CD8-positive, alpha-beta T cell (primary cell): ENCODE measurements at regions of chr2 and their contacts with region 1.

Region 1: DNA sequence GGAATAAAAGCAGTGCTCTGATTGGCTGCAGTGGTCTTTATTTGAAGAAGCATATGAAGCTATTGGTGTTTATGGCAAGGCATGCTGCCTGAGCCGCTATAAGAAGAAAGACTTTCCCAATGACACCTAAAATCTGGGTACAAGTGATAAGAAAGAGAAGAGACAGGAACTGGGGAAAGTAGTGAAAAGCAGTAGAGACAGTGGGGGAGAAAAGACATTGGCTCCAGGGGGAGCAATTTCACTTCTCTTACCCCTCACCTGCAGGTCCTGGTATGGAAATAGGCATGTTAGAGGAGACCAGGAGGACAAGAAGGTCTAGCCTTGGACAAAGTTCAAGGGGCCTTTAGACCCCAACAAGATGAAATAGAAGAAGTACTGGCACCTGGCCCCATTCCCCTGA is 47.1 kb downstream of the PLCL1 start:
- DNase-seq: peak in 1 of 9 experiments; percentile 33
- ATAC-seq: no peak
- H3K4me3 ChIP-seq: no peak overlapping the region
- H3K4me3 Mint-ChIP-seq: no peak overlapping the region
- H3K27ac ChIP-seq: no peak overlapping the region
- H3K27ac Mint-ChIP-seq: no peak overlapping the region
- H3K4me1 ChIP-seq: peaks cover 23% of the 10 kb centered on the region
- H3K4me1 Mint-ChIP-seq: peaks cover 54% of the 10 kb centered on the region
- H3K27me3 ChIP-seq: no peaks in the 10 kb centered on the region
- H3K27me3 Mint-ChIP-seq: no peaks in the 10 kb centered on the region
- CTCF ChIP-seq: no peak

Region 2: DNA sequence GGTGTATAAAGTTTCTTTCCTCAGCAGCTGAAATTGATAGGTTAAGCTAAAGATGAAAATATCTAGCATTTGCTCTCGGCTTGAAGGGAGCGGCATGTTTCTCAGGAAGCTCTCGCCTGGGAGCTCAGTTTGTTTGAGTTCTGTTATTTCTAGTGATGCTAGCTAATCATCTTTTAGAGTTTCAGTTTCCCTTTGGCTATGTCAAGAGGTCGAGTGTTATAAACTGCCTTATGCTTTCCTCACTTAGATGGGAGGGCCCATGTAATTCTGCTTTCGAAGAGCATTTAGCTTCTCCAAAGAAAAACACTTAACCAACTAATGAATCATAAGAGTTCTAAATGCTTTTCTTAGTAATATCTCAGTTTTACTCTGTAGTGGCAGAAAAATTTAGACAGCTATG is 13.4 kb before region 1 on chr2:
- CTCF ChIA-PET with region 1: interaction called, 9 read pairs
- POLR2A ChIA-PET with region 1: interaction called, 3 read pairs
- intact Hi-C with region 1: loop called in 1 of 2 experiments (anchors 1 kb)
- DNase-seq: peak in 2 of 9 experiments; percentile 40 to 66
- ATAC-seq: peak; percentile 88
- H3K4me3 ChIP-seq: peak overlapping the region in 1 of 2 experiments; percentile 30
- H3K4me3 Mint-ChIP-seq: peak overlapping the region; percentile 69
- H3K27ac ChIP-seq: peak overlapping the region; percentile 42 to 47
- H3K27ac Mint-ChIP-seq: peak overlapping the region; percentile 87
- H3K4me1 ChIP-seq: peaks cover 23% of the 10 kb centered on the region
- H3K4me1 Mint-ChIP-seq: peaks cover 45% of the 10 kb centered on the region
- H3K27me3 ChIP-seq: no peaks in the 10 kb centered on the region
- H3K27me3 Mint-ChIP-seq: no peaks in the 10 kb centered on the region
- CTCF ChIP-seq: no peak

Region 3: GRCh38 chr2:197863744-197864143 is 12.3 kb after region 1 on chr2:
- CTCF ChIA-PET with region 1: interaction called, 5 read pairs
- POLR2A ChIA-PET with region 1: interaction called, 3 read pairs
- intact Hi-C with region 1: loop called (anchors 2 kb)
- DNase-seq: no peak
- ATAC-seq: no peak
- H3K4me3 ChIP-seq: no peak overlapping the region
- H3K4me3 Mint-ChIP-seq: no peak overlapping the region
- H3K27ac ChIP-seq: no peak overlapping the region
- H3K27ac Mint-ChIP-seq: no peak overlapping the region
- H3K4me1 ChIP-seq: peaks cover 9% of the 10 kb centered on the region
- H3K4me1 Mint-ChIP-seq: peaks cover 19% of the 10 kb centered on the region
- H3K27me3 ChIP-seq: no peaks in the 10 kb centered on the region
- H3K27me3 Mint-ChIP-seq: no peaks in the 10 kb centered on the region
- CTCF ChIP-seq: no peak

Region 4: GRCh38 chr2:197873293-197873701 is 21.8 kb after region 1 on chr2:
- CTCF ChIA-PET with region 1: interaction called, 5 read pairs
- POLR2A ChIA-PET with region 1: no interaction called
- intact Hi-C with region 1: loop called in 1 of 2 experiments (anchors 2 kb)
- DNase-seq: no peak
- ATAC-seq: no peak
- H3K4me3 ChIP-seq: no peak overlapping the region
- H3K4me3 Mint-ChIP-seq: no peak overlapping the region
- H3K27ac ChIP-seq: no peak overlapping the region
- H3K27ac Mint-ChIP-seq: no peak overlapping the region
- H3K4me1 ChIP-seq: peaks cover 22% of the 10 kb centered on the region
- H3K4me1 Mint-ChIP-seq: peaks cover 40% of the 10 kb centered on the region
- H3K27me3 ChIP-seq: no peaks in the 10 kb centered on the region
- H3K27me3 Mint-ChIP-seq: no peaks in the 10 kb centered on the region
- CTCF ChIP-seq: no peak

Region 5: DNA sequence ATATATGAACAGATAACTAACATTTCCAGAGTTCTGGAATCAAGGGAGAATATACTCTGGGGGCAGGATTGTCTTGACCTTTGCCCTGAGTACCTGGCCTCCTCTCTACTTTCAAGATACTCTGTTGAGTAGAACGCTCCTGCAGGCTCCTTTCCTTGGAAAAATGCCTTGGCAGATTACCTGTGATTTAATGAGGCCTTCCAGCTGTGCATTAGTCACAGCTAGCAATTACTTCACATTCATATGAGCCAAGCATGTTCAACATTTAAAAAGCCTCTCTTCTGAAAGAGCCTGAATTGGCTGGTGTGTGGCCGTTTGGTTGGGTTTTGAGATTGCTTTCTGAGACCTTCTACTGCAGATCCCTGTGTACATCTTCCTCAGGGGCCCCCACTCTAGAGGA is 95.1 kb after region 1 on chr2:
- CTCF ChIA-PET with region 1: no interaction called
- POLR2A ChIA-PET with region 1: no interaction called
- intact Hi-C with region 1: no loop called
- DNase-seq: no peak
- ATAC-seq: no peak
- H3K4me3 ChIP-seq: no peak overlapping the region
- H3K4me3 Mint-ChIP-seq: no peak overlapping the region
- H3K27ac ChIP-seq: no peak overlapping the region
- H3K27ac Mint-ChIP-seq: no peak overlapping the region
- H3K4me1 ChIP-seq: no peaks in the 10 kb centered on the region
- H3K4me1 Mint-ChIP-seq: peaks cover 27% of the 10 kb centered on the region
- H3K27me3 ChIP-seq: no peaks in the 10 kb centered on the region
- H3K27me3 Mint-ChIP-seq: no peaks in the 10 kb centered on the region
- CTCF ChIP-seq: no peak

Region 6: GRCh38 chr2:198053776-198054698 is 202.6 kb after region 1 on chr2:
- CTCF ChIA-PET with region 1: interaction called, 8 read pairs
- POLR2A ChIA-PET with region 1: no interaction called
- intact Hi-C with region 1: loop called in 1 of 2 experiments (anchors 1 kb)
- DNase-seq: peak in 5 of 9 experiments; percentile 34 to 65 (median 50)
- ATAC-seq: no peak
- H3K4me3 ChIP-seq: no peak overlapping the region
- H3K4me3 Mint-ChIP-seq: no peak overlapping the region
- H3K27ac ChIP-seq: no peak overlapping the region
- H3K27ac Mint-ChIP-seq: no peak overlapping the region
- H3K4me1 ChIP-seq: no peaks in the 10 kb centered on the region
- H3K4me1 Mint-ChIP-seq: peaks cover 2% of the 10 kb centered on the region
- H3K27me3 ChIP-seq: no peaks in the 10 kb centered on the region
- H3K27me3 Mint-ChIP-seq: no peaks in the 10 kb centered on the region
- CTCF ChIP-seq: peak; percentile 34

Region 7: GRCh38 chr2:198630384-198630783 is 778.9 kb after region 1 on chr2:
- CTCF ChIA-PET with region 1: no interaction called
- POLR2A ChIA-PET with region 1: no interaction called
- intact Hi-C with region 1: no loop called
- DNase-seq: no peak
- ATAC-seq: no peak
- H3K4me3 ChIP-seq: no peak overlapping the region
- H3K4me3 Mint-ChIP-seq: no peak overlapping the region
- H3K27ac ChIP-seq: no peak overlapping the region
- H3K27ac Mint-ChIP-seq: no peak overlapping the region
- H3K4me1 ChIP-seq: no peaks in the 10 kb centered on the region
- H3K4me1 Mint-ChIP-seq: no peaks in the 10 kb centered on the region
- H3K27me3 ChIP-seq: no peaks in the 10 kb centered on the region
- H3K27me3 Mint-ChIP-seq: no peaks in the 10 kb centered on the region
- CTCF ChIP-seq: no peak